ENCODE measurements at regions of chr3 and their contacts with region 1.

Region 1: GRCh38 chr3:45978006-45978761 is 17.4 kb downstream of the FYCO1 start:
- DNase-seq: peak; percentile 83
- H3K4me3 Mint-ChIP-seq: peak overlapping the region; percentile 50
- H3K27ac Mint-ChIP-seq: peak overlapping the region; percentile 97
- H3K4me1 Mint-ChIP-seq: peaks cover 84% of the 10 kb centered on the region
- H3K27me3 Mint-ChIP-seq: no peaks in the 10 kb centered on the region

Region 2: GRCh38 chr3:45906681-45907407 is 71.3 kb before region 1 on chr3:
- CTCF ChIA-PET with region 1: no interaction called
- POLR2A ChIA-PET with region 1: no interaction called
- DNase-seq: no peak
- H3K4me3 Mint-ChIP-seq: no peak overlapping the region
- H3K27ac Mint-ChIP-seq: no peak overlapping the region
- H3K4me1 Mint-ChIP-seq: peaks cover 42% of the 10 kb centered on the region
- H3K27me3 Mint-ChIP-seq: peaks cover 40% of the 10 kb centered on the region

Region 3: DNA sequence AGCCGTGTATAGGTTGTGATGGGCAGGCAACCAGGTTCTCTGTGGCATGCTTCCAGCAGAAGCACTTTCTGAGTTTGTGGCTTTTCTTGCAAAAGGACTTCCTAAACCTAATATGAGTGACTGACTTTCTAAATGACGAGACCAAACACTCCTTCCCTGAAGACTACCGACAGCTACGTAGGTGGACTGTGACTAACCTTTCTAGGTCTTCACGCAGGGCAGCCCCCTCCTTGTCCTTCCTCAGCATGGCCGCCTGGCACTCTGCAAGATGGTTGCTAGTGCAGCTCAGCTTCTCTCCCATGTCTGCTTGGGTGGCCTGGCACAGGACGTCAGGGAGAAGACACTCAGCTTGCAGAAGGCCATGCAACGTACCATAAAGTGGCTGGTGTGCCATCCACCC is 14.0 kb before region 1 on chr3:
- CTCF ChIA-PET with region 1: interaction called, 20 read pairs
- POLR2A ChIA-PET with region 1: interaction called, 76 read pairs
- DNase-seq: peak; percentile 62
- H3K4me3 Mint-ChIP-seq: no peak overlapping the region
- H3K27ac Mint-ChIP-seq: peak overlapping the region; percentile 83
- H3K4me1 Mint-ChIP-seq: peaks cover 80% of the 10 kb centered on the region
- H3K27me3 Mint-ChIP-seq: no peaks in the 10 kb centered on the region

Measured in activated CD4-positive, alpha-beta memory T cell treated with anti-CD3 and anti-CD28 coated beads, Interleukin-2, amount 10 ng/mL, durations not matched to agents 7 days and 5 days (primary cell).